ENCODE measurements at regions of chr2 and their contacts with region 1.

Region 1: GRCh38 chr2:233486778-233487552 is 79.6 kb downstream of the USP40 start:
- DNase-seq: peak; percentile 94
- ATAC-seq: peak; percentile 68
- H3K4me3 ChIP-seq: peak overlapping the region; percentile 53; the same call in 1 of the 2 replicates
- H3K27ac ChIP-seq: peak overlapping the region; percentile 100
- H3K4me1 ChIP-seq: peaks cover 45% of the 10 kb centered on the region
- H3K27me3 ChIP-seq: no peaks in the 10 kb centered on the region
- CTCF ChIP-seq: no peak

Region 2: DNA sequence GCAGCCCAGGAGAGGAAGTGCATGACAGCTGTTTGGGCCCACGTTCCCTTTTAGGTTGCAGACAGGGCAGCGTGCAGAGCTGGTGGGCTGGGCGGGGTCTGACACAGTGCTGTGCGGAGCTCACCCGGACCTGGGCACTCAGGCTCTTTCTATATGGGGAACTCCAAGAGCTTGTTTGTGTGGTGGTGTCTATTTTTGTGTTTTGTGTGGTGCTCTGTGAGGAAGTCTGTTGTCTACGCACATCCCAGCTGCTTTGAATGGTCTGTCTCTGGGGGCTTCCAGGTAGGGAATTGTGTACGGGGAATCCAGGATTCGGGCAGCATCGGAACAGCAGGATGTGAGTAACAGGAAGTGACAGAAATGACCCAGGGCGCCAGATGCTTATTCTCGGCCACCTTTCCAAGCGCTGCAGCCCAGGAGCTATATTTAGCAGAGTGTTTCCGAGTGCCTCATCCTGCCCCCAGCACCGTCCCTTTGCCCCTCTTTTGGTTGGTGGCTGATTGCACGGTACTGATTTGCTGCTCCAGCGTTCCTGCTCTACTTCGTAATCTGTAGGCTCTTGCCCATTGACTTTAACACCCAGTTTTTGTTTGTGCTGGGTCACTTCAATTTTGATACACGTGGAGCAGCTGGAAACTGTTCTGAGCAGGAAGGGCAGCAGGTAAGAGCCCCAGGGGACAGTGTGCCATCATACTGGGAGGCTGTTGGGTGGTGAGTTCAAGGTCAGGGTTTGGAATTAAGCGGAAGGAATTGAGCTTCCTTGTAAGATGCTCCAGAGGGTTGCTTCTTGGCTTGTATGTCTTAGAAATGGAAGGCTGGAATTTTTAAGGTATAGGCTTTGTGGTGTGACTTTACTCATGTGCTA is 68.0 kb before region 1 on chr2:
- CTCF ChIA-PET with region 1: no interaction called
- POLR2A ChIA-PET with region 1: no interaction called
- intact Hi-C with region 1: loop called (anchors 1 kb)
- DNase-seq: peak; percentile 81
- ATAC-seq: peak; percentile 13
- H3K4me3 ChIP-seq: peak overlapping the region; percentile 63
- H3K27ac ChIP-seq: peak overlapping the region; percentile 96
- H3K4me1 ChIP-seq: peaks cover 94% of the 10 kb centered on the region
- H3K27me3 ChIP-seq: no peaks in the 10 kb centered on the region
- CTCF ChIP-seq: no peak

Region 3: DNA sequence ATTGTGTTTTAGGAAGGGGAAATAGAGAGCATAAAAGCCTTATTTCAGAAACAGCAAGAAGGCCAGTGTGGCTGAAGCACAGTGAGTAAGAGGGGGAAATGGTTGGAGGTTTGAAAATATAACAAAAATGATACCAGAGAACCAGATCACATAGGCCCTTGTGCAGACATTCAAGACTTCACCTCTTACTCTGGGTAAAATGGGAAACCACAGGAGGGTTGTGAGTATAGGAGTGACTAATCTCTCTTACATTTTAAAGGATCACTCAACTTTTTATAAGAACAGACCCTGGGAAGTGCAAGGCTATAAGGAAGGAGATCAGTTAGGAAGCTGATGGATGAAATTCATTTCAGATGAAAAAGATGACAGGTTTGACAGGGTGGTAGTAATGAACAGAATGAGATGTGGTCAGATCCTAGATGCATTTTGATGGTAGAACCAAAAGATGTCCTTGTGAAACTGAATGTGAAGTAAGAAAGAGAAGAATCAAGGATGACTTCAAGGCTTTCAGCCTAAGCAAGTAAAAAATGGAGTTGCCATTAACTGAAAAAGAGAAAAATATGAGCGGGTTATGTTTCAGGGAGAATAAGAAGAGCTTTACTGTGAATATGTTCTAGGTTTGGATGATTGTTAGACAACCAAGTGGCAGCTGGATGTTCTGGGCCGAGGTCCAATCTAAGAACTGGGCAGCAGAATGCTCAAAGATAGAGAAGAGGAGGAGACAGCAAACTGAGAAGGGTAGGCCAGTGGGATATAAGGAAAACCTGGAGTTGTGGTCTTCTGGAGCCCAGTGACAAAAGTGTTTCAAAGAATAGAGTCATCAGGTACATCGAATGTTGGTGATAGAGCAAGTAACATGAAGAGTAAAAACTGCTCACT is 14.5 kb after region 1 on chr2:
- CTCF ChIA-PET with region 1: no interaction called
- POLR2A ChIA-PET with region 1: interaction called, 3 read pairs
- intact Hi-C with region 1: loop called (anchors 2 kb)
- DNase-seq: peak; percentile 73
- ATAC-seq: peak; percentile 94
- H3K4me3 ChIP-seq: no peak overlapping the region
- H3K27ac ChIP-seq: peak overlapping the region; percentile 68
- H3K4me1 ChIP-seq: peaks cover 25% of the 10 kb centered on the region
- H3K27me3 ChIP-seq: no peaks in the 10 kb centered on the region
- CTCF ChIP-seq: no peak

Region 4: GRCh38 chr2:233553366-233553765 is 66.4 kb after region 1 on chr2:
- CTCF ChIA-PET with region 1: no interaction called
- POLR2A ChIA-PET with region 1: no interaction called
- intact Hi-C with region 1: loop called (anchors 2 kb)
- DNase-seq: no peak
- ATAC-seq: no peak
- H3K4me3 ChIP-seq: no peak overlapping the region
- H3K27ac ChIP-seq: no peak overlapping the region
- H3K4me1 ChIP-seq: peaks cover 31% of the 10 kb centered on the region
- H3K27me3 ChIP-seq: no peaks in the 10 kb centered on the region
- CTCF ChIP-seq: no peak